RWPE1 (cell line): ENCODE measurements at regions of chr5 and their contacts with region 1.

Region 1: GRCh38 chr5:92886751-92887150 is 694.3 kb downstream of the NR2F1-AS1 start:
- DNase-seq: no peak
- H3K27ac ChIP-seq: no peak overlapping the region
- CTCF ChIP-seq: no peak

Region 2: DNA sequence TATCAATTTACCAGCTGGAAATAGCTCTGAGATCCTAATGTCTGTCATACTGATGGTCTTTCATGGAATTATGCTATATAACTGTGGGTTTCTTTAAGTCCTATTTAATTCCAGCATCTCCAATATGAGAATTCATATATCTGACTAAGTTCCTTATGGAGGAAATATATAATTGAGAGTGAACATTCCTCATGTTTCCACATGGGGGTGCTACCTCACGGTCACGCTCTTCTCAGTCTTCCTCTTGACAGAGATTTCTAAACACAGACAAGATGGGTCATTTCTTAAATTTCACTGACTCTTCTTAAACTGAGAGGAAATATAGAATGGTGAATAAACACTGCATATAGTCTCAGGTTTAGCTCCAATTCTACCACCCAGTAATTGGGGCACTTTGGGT is 1943.8 kb after region 1 on chr5:
- CTCF ChIA-PET with region 1: interaction called, 15 read pairs
- POLR2A ChIA-PET with region 1: no interaction called
- DNase-seq: no peak
- H3K27ac ChIP-seq: no peak overlapping the region
- CTCF ChIP-seq: 0 out of 2 replicates have a peak, but pooled peaks have one; percentile 13